Activated B cell treated with CpG ODN at 0.5 μM for 24 hours (primary cell): ENCODE measurements at regions of chr2 and their contacts with region 1.

Region 1: DNA sequence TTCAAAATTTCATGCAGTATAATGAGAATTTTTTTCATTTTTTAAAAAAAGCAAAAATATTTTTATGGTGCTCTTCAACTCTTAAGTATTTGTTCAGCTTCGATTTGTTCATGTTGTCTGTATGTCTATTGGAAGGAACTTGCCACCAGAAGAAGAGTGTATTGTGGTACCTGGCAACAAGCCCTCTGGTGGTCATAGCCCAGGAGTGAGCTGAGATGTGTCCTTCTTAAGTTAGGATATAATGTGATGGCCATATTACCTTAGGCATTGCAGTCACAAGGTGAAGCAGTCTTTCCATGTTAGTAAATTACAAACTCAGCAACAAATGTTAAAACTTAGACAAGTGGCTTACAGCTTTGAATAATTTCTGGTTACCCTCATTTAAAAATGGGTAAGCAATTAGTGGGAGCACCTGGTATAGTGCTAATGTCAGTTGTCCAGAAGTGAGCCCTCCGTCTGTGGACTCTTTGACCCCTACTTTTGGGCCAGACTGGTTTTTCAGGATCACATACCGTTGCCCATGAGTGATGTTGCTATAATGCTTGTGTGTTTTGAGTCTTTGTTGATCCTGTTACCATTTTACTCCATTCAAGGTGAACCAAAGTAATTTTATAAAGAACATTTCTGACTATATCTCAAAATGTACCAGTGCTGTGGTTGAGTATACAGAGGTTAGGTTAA is 57.4 kb downstream of the MYO1B start:
- DNase-seq: no peak
- ATAC-seq: peak; percentile 37
- H3K4me3 Mint-ChIP-seq: no peak overlapping the region
- H3K27ac Mint-ChIP-seq: no peak overlapping the region
- H3K4me1 Mint-ChIP-seq: peaks cover 2% of the 10 kb centered on the region
- H3K27me3 Mint-ChIP-seq: no peaks in the 10 kb centered on the region
- CTCF ChIP-seq: no peak

Region 2: DNA sequence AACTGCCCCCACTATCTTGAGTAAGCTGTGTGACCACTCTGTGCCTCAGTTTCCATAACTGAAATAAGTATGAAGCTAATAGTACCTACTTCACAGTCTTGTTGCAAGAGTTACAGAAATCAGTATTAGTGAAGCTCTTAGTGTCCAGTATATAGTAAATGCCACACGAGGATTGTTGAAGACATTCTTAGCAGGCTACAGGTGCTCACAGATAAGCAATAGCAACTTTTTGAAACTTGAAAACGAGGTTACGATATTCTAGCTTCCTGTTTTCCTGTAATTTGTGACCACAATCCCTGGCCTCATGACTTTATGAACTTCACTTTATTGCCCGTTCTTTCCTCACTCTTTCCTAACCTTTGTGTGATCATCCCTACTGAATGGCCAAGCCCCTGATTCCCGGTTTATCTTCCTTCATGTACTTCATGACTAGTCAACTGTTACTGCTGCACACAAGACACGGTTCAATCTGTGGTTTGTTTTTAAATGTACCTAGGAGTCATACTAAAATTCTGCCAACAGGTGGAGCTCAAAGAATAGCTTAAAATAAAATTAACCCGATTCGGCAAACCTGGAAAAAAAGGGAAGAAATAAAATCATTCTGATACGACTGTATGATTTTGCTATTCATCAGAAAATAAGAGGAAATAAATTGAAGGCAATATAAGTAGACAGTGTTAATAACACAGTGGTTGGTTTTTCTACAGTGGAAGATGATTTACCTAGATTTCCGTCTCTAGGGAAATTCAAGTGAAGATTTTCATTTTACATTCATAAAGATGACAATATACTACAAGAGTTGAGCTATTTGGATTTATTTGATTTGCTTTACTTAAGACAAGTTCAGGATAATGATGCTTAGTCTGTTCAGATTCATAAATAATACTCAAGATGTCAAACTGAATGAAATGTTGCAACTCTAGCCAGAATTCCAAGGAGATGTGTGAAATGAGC is 250.5 kb before region 1 on chr2:
- CTCF ChIA-PET with region 1: interaction called, 4 read pairs
- POLR2A ChIA-PET with region 1: no interaction called
- intact Hi-C with region 1: loop called (anchors 1 kb)
- DNase-seq: no peak
- ATAC-seq: peak; percentile 62
- H3K4me3 Mint-ChIP-seq: no peak overlapping the region
- H3K27ac Mint-ChIP-seq: no peak overlapping the region
- H3K4me1 Mint-ChIP-seq: no peaks in the 10 kb centered on the region
- H3K27me3 Mint-ChIP-seq: peaks cover 9% of the 10 kb centered on the region
- CTCF ChIP-seq: peak; percentile 70

Region 3: DNA sequence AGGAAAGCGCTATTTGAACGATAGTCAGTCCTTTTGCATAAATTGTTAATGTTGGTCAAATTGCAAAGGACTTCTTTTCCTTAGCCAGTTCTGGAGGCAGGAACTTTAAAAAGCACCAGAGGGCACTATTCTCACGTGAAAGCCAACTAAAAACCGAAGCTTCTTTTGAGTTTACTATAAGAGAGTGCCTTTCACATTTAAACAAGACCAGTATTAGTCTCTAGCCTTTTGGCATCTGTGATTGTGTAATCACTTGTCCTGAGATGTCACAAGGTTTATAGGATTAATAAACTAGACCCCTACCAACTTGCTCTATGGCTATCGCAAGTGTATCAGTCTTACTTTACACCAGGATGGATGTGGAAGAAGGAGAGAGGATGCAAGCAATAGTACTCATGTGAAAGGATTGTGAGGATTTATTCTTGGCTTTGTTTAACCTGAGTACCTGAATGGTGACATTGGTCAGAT is 137.4 kb before region 1 on chr2:
- CTCF ChIA-PET with region 1: interaction called, 9 read pairs
- POLR2A ChIA-PET with region 1: interaction called, 3 read pairs
- intact Hi-C with region 1: loop called (anchors 1 kb)
- DNase-seq: no peak
- ATAC-seq: no peak
- H3K4me3 Mint-ChIP-seq: no peak overlapping the region
- H3K27ac Mint-ChIP-seq: no peak overlapping the region
- H3K4me1 Mint-ChIP-seq: peaks cover 2% of the 10 kb centered on the region
- H3K27me3 Mint-ChIP-seq: peaks cover 10% of the 10 kb centered on the region
- CTCF ChIP-seq: no peak

Region 4: DNA sequence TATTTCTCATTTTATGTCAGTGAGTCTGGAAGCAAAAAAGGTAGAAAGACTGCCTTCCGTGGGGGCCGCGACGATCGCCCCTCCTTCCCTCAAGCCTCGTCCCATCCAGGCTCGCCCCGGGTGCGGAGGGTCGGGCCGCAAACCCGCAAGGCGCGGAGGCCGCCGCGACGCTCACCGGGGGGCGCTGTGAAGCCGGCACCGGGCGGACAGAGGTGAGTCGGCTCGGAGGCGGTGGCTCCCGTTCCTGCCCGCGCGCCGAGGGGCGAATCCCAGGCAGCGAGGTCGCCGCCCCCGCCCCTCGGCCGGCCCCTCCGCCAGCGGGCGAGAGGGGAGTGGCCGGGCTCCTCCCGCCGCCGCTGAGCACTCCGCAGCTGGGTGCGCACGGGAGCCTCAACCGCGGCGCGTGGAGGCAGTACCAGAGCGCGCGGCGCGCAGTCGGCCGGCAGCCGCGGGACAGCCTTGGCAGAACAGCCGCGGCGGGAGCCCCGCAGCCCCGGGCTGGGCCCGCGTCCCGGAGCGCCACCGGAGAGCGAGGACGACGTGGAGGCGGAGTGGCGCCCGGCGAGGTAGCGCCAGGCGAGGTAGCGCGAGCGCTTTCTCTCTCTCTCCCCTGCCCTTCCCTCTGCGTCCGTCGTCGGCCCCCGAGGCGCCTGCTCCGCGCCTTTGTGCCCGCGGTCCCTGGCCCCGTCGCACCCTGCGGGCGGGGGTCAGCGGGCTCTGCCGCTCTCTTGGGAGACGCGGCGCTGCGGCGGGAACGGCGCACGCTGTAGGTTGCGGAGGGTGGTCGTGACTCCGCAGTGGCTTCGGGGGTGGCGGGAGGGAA is 57.3 kb before region 1 on chr2 and contains the start of gene MYO1B:
- CTCF ChIA-PET with region 1: interaction called, 6 read pairs
- POLR2A ChIA-PET with region 1: no interaction called
- intact Hi-C with region 1: loop called (anchors 1 kb)
- DNase-seq: peak; percentile 58
- ATAC-seq: peak; percentile 77
- H3K4me3 Mint-ChIP-seq: peak within 1 kb of the TSS; percentile 77
- H3K27ac Mint-ChIP-seq: no peak within 1 kb of the TSS
- H3K4me1 Mint-ChIP-seq: peaks cover 16% of the 10 kb centered on the region
- H3K27me3 Mint-ChIP-seq: peaks cover 4% of the 10 kb centered on the region
- CTCF ChIP-seq: no peak
- total RNA-seq, gene MYO1B: 2.5 and 2.7 TPM in 2 replicates

Region 5: DNA sequence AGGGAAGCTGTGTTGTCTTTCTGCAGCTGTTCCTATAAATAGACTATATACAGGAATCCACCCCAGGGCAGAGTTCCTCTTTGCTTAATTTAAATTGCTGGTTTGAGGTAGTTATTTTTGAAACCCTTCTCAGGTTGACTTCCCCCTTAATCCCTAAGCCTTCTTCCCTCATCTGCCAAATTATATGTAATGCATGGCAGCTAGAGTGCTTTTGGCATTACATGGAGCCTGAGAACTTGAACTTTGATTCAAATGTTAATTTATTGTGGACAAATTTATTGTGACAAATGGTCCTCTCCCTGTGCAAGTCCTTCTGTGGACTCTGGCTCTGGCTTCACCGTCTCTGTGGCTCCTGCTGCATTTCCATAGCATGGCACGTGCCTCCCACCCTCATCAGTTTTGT is 28.2 kb before region 1 on chr2:
- CTCF ChIA-PET with region 1: interaction called, 3 read pairs
- POLR2A ChIA-PET with region 1: no interaction called
- intact Hi-C with region 1: loop called (anchors 1 kb)
- DNase-seq: no peak
- ATAC-seq: peak; percentile 79
- H3K4me3 Mint-ChIP-seq: peak overlapping the region; percentile 72
- H3K27ac Mint-ChIP-seq: peak overlapping the region; percentile 78
- H3K4me1 Mint-ChIP-seq: peaks cover 72% of the 10 kb centered on the region
- H3K27me3 Mint-ChIP-seq: no peaks in the 10 kb centered on the region
- CTCF ChIP-seq: no peak

Region 6: DNA sequence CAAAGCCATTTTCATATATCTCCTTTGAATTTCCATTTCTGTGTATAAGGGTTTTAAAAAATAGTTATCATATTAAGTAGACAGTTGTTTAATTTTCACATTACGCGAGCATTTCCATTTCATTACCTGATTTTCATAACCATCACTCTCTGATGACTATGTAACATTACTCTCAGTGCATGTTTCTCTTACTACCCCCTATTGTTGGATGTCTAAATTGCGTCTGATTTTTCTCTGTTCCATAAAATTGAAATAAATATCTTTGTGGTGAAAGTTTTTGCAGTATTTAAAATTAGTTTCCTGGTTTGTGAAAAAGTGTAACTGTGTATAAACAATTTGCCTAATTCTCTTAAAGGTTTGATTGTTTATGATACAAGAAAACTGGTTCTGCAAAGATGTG is 66.4 kb after region 1 on chr2:
- CTCF ChIA-PET with region 1: no interaction called
- POLR2A ChIA-PET with region 1: no interaction called
- intact Hi-C with region 1: loop called (anchors 5 kb)
- DNase-seq: no peak
- ATAC-seq: no peak
- H3K4me3 Mint-ChIP-seq: no peak overlapping the region
- H3K27ac Mint-ChIP-seq: no peak overlapping the region
- H3K4me1 Mint-ChIP-seq: no peaks in the 10 kb centered on the region
- H3K27me3 Mint-ChIP-seq: no peaks in the 10 kb centered on the region
- CTCF ChIP-seq: no peak

Region 7: DNA sequence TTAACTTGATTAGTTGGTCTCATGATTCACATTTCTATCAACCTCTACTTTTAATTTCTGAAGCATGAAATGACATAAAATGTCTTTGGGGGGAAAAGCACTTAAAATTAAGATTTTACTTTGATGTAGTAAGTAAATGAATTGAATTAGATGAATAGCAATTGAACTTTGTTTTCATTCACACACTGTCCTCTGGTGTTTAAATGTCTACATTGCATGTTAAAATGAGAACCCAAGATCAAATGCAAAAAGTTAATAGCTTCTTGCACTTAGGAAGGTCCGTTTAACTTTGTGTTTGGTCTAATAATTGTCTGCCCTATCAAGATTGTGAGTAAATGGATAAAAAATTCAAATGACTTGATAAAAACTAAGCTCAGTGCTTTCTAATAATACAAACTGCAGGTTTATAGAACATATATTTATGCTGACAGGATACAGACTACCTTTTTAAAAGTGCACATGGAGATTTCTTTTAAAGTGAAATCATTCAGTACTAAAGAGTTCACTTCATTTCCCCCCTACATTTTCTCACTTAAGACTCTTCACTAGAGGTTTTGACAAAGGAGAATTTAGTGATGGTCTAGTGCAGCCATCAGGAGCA is 219.1 kb after region 1 on chr2:
- CTCF ChIA-PET with region 1: interaction called, 4 read pairs
- POLR2A ChIA-PET with region 1: no interaction called
- intact Hi-C with region 1: loop called (anchors 5 kb)
- DNase-seq: no peak
- ATAC-seq: no peak
- H3K4me3 Mint-ChIP-seq: no peak overlapping the region
- H3K27ac Mint-ChIP-seq: no peak overlapping the region
- H3K4me1 Mint-ChIP-seq: no peaks in the 10 kb centered on the region
- H3K27me3 Mint-ChIP-seq: peaks cover 9% of the 10 kb centered on the region
- CTCF ChIP-seq: peak; percentile 78